Naive thymus-derived CD8-positive, alpha-beta T cell (primary cell): ENCODE measurements at regions of chr15 and their contacts with region 1.

Region 1: DNA sequence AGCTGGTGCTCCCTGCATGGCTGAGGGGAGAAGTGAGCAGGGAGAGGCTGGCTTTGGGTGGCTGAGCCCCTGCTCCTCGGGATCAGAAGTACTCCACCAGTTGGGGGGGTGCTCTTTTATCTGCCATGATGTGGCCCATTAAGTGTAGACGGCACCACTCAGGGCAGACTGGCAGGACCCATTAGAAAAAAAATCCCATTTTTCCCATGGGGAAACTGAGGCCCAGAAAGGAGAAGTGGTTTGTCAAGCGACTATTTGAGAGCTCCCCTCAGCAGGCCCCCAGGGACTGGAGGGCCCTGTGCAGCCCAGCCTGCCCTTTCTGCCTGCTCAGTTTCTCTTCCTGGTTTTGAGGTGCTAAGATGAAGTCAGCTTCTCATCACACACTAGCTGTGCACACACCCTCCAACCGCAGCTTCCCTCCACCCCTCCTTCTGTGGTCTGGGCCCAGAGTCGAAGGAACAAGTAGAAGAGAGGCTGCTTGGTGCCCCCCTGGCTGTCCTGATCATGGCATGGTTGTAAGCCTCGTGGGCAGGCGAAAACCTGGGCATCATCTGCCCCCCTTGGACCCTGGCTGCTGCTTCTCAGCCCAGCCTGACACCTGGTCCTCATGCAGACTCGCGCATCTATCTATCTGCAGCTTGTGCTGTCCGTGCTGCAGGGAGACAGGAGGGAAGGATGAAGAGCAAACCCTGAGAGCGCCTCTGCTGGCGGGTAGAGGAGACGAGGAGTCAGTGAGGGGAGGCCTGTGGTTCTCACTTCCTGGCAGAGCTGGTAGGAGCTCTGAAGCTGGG is 5.6 kb downstream of the CSK start:
- DNase-seq: peak; percentile 71 to 99 (median 92)
- ATAC-seq: peak; percentile 73 to 82
- H3K4me3 Mint-ChIP-seq: peak overlapping the region; percentile 85 to 97 (median 93)
- H3K27ac Mint-ChIP-seq: peak overlapping the region; percentile 94 to 99 (median 98)
- H3K4me1 Mint-ChIP-seq: peaks cover 46 to 84% (median 75%) of the 10 kb centered on the region in 4 donors
- H3K27me3 Mint-ChIP-seq: no peaks in the 10 kb centered on the region

Region 2: DNA sequence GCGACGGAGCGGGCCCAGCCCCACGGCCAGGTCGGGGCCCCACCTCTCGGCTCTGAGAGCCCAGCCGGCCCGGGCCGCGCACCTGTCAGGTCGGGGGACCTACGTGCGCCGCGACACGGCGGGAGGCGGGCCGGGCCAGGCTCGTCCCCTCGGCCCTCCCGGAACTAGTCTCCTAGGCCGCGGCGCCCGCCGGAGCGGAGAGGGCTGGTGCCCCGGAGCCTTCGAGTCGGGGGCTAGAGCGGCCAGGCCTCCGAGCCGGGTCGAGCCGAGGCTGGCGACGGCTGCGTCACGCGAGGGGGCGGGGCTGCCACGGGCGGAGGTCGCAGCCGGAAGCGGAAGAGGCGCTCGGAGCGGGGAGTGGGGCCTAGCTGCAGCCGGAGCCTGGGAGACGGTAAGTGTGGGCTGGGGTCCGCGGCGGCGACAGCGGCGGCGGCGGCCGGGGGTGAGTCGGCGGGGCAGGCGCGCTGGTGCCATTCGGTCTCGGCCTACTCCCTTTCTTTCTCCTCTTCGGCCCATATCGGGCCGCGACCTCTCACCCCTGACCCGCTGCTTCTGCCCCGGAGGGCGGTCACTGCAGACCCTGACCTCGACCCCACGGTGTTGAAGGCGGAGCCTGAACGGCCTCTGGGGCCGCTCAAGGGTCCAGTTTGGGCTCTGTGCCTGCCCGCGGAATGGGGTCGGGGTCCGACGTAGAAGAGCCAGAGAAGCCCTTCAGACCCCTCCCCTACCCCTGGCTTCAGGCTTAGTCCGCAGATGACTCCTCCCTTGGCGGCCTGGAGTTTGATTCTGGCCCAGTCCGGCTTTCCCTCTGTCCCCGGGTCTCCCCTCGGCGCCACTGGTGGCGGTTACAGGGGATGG is 171.7 kb before region 1 on chr15 and contains the start of gene CLK3:
- POLR2A ChIA-PET with region 1: interaction called, 26 read pairs
- DNase-seq: peak; percentile 91 to 97 (median 96)
- ATAC-seq: peak; percentile 75 to 78
- H3K4me3 Mint-ChIP-seq: peak within 1 kb of the TSS; percentile 87 to 97 (median 92)
- H3K27ac Mint-ChIP-seq: peak within 1 kb of the TSS; percentile 87 to 99 (median 97)
- H3K4me1 Mint-ChIP-seq: peaks cover 22 to 46% (median 42%) of the 10 kb centered on the region in 4 donors
- H3K27me3 Mint-ChIP-seq: no peaks in the 10 kb centered on the region
- polyA plus RNA-seq, gene CLK3: 49.0 to 92.8 (median 55.1) TPM

Region 3: DNA sequence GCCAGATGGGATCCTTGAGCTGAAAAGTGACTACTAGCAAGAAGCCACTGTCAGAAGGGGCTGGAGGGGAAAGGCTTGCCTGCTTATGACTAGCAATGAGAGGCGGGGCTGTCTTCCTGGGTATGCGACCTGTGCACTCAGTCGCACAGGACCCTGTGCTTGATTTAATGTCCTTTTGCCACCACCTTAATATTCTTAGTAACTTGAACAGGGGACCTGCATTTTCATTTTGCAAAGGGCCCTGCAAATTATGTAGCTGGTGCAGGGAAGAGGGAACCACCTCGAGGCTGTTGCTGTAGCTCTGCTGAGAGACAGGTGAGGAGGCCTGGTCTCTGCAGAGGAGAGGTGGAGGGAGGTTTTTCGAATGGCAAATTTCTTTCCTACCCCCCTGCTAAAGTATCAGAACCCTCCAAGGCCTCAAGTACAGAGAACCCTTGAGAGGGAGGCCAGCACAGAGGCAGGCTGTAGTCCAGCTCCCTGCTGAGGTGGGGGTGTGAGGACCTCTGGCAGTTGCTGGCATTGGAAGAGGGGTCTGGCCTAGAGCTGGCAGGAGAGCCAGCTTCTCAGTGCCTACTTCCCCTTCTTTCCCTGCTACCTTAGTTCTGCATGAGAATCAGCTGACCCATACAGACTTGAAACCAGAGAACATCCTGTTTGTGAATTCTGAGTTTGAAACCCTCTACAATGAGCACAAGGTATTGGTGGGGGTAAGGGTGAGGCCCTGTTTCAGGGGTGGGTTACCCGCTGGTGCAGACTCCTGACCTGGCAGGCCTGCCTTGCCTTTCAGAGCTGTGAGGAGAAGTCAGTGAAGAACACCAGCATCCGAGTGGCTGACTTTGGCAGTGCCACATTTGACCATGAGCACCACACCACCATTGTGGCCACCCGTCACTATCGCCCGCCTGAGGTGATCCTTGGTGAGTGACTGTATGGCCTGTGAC is 160.4 kb before region 1 on chr15:
- POLR2A ChIA-PET with region 1: interaction called, 10 read pairs
- DNase-seq: peak in 4 of 10 donors; percentile 27 to 65 (median 51)
- ATAC-seq: peak; percentile 79 to 85
- H3K4me3 Mint-ChIP-seq: peak overlapping the region; percentile 47 to 80 (median 68)
- H3K27ac Mint-ChIP-seq: peak overlapping the region; percentile 88 to 96 (median 94)
- H3K4me1 Mint-ChIP-seq: peaks cover 26 to 64% (median 52%) of the 10 kb centered on the region in 4 donors
- H3K27me3 Mint-ChIP-seq: no peaks in the 10 kb centered on the region

Region 4: DNA sequence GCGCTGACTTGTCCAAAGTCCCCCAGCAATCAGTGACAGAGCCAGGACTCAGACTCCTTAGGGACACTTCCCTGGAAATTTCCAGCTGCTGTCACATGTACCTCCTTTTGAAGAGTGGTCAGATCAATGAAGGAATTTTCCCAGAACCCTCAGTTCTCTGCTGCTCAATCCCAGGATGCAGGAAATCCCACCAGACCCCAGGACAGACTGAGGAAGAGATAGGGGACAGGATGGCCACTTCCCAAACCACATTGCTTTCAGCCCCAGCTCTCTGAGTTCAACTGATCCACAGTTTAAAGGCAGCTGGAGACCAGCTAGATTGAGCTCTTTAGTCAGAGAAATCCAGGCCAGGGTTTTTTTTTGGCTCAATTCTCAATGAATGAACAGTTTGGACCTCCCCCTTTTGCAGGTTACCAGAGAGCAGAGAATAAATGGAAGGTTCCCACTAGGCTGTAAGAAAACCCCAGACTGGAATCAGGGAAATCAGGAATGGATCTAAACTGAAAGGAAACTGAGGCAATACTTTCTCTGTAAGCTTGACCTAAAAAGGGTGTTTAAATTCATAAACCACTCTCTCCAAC is 63.6 kb before region 1 on chr15:
- POLR2A ChIA-PET with region 1: no interaction called
- DNase-seq: peak in 1 of 10 donors; percentile 30
- ATAC-seq: peak; percentile 27 to 47
- H3K4me3 Mint-ChIP-seq: no peak overlapping the region
- H3K27ac Mint-ChIP-seq: no peak overlapping the region
- H3K4me1 Mint-ChIP-seq: peaks cover 4 to 13% (median 10%) of the 10 kb centered on the region in 4 donors
- H3K27me3 Mint-ChIP-seq: peaks cover 0 to 12% (median 7%) of the 10 kb centered on the region in 5 donors

Region 5: GRCh38 chr15:74799856-74800547 is 12.6 kb after region 1 on chr15:
- POLR2A ChIA-PET with region 1: interaction called, 1,300 read pairs
- DNase-seq: peak; percentile 80 to 92 (median 88)
- ATAC-seq: peak; percentile 84 to 95
- H3K4me3 Mint-ChIP-seq: peak overlapping the region in 9 of 10 donors; percentile 14 to 82 (median 22)
- H3K27ac Mint-ChIP-seq: peak overlapping the region; percentile 80 to 96 (median 90)
- H3K4me1 Mint-ChIP-seq: peaks cover 26 to 57% (median 53%) of the 10 kb centered on the region in 4 donors
- H3K27me3 Mint-ChIP-seq: no peaks in the 10 kb centered on the region

Region 6: GRCh38 chr15:74842581-74843444 is 55.4 kb after region 1 on chr15 and contains the start of gene ULK3:
- POLR2A ChIA-PET with region 1: interaction called, 13 read pairs
- DNase-seq: peak; percentile 88 to 95 (median 92)
- ATAC-seq: peak; percentile 87 to 89
- H3K4me3 Mint-ChIP-seq: peak within 1 kb of the TSS; percentile 85 to 93 (median 88)
- H3K27ac Mint-ChIP-seq: peak within 1 kb of the TSS; percentile 84 to 98 (median 96)
- H3K4me1 Mint-ChIP-seq: peaks cover 30 to 56% (median 53%) of the 10 kb centered on the region in 4 donors
- H3K27me3 Mint-ChIP-seq: no peaks in the 10 kb centered on the region
- polyA plus RNA-seq, gene ULK3: 16.3 to 32.2 (median 16.6) TPM

Region 7: GRCh38 chr15:74873036-74873755 is 85.8 kb after region 1 on chr15 and contains the start of gene SCAMP2:
- POLR2A ChIA-PET with region 1: no interaction called
- DNase-seq: peak; percentile 82 to 98 (median 91)
- ATAC-seq: peak; percentile 96
- H3K4me3 Mint-ChIP-seq: peak within 1 kb of the TSS; percentile 94 to 100 (median 98)
- H3K27ac Mint-ChIP-seq: peak within 1 kb of the TSS; percentile 90 to 99 (median 96)
- H3K4me1 Mint-ChIP-seq: peaks cover 15 to 56% (median 46%) of the 10 kb centered on the region in 4 donors
- H3K27me3 Mint-ChIP-seq: no peaks in the 10 kb centered on the region
- polyA plus RNA-seq, gene SCAMP2: 109 to 121 (median 119) TPM

Region 8: GRCh38 chr15:74906446-74907162 is 119.2 kb after region 1 on chr15 and contains the start of gene FAM219B:
- POLR2A ChIA-PET with region 1: interaction called, 11 read pairs
- DNase-seq: peak; percentile 37 to 85 (median 66)
- ATAC-seq: peak; percentile 79 to 83
- H3K4me3 Mint-ChIP-seq: peak within 1 kb of the TSS; percentile 94 to 99 (median 98)
- H3K27ac Mint-ChIP-seq: peak within 1 kb of the TSS; percentile 93 to 99 (median 97)
- H3K4me1 Mint-ChIP-seq: peaks cover 24 to 46% (median 42%) of the 10 kb centered on the region in 4 donors
- H3K27me3 Mint-ChIP-seq: no peaks in the 10 kb centered on the region
- polyA plus RNA-seq, gene FAM219B: 18.8 to 22.3 (median 20.7) TPM